WTC11 (cell line): ENCODE measurements at regions of chr11 and their contacts with region 1.

Region 1: DNA sequence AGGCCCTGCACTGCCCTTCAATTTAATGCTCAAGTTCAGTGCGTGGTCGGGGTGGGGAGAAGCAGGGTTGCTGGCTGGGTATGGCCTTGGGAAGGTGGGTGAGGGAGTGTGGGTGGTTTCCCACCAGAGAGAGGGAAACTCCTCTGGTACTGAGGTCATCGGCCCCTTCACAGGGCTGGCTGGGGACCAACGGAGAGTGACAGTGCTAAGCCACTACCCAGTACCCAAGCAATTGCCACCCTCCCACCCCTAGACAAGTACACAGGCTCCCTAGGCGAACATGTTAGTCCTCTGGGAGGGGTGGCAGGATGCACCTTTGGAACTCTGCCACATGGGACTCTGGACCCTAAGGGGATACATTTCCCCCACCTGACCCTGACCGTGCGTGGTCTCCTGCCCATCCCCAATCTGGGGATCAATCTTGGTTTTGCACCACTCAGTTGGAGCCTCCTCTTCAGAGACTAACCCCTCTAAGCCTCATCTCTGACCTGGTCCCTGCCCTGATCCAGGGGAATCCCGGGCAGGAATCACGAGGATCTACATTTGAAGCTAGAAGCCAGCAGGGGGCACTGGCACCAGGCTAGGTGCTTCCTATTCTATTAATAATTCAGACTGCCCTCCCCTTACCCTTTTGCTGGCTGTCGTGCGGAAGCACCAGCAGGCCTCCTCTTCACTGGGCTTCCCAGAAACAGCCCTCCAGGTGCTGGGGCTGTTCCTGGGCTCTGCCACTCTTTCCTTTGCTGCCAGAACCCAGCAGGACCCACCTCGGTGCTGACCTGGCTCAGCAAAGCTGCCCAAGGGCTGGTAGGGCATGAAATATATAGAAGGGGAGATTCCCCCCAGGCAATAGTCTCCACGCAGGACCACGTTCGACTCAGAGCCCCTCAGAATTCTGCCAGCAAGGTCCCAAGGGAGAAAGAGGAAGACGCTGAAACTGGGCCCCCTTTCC is 377.7 kb downstream of the TENM4 start:
- DNase-seq: peak; percentile 62
- ATAC-seq: peak; percentile 76
- H3K4me3 Mint-ChIP-seq: no peak overlapping the region
- H3K27ac Mint-ChIP-seq: no peak overlapping the region
- H3K4me1 Mint-ChIP-seq: peaks cover 40% of the 10 kb centered on the region
- H3K27me3 Mint-ChIP-seq: no peaks in the 10 kb centered on the region; the same call in 1 of the 2 replicates
- CTCF ChIP-seq: no peak

Region 2: GRCh38 chr11:79052544-79052943 is 10.5 kb before region 1 on chr11:
- CTCF ChIA-PET with region 1: interaction called, 23 read pairs
- POLR2A ChIA-PET with region 1: no interaction called
- DNase-seq: peak; percentile 55
- ATAC-seq: peak; percentile 94
- H3K4me3 Mint-ChIP-seq: no peak overlapping the region
- H3K27ac Mint-ChIP-seq: no peak overlapping the region
- H3K4me1 Mint-ChIP-seq: peaks cover 9% of the 10 kb centered on the region
- H3K27me3 Mint-ChIP-seq: no peaks in the 10 kb centered on the region
- CTCF ChIP-seq: peak; percentile 30; the same call in 1 of the 2 replicates

Region 3: DNA sequence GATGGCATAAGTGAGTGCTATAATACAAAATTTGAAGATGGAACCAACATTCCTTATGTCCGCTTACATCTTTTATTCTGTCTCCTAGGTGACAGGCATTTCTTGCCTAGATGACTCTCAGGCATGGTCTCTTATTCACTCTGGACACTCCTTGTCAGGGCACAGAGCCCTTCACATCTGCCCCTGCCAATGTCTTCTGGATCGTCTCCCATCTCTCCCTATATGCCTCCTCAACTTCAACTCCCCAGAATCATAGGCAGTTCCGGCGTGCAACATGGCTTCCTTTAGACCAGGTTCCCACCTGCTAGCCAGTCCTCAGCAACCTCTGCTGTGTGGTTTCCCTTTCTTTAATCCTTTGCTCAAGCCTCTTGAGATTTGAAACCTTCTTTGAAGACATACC is 76.8 kb after region 1 on chr11:
- CTCF ChIA-PET with region 1: no interaction called
- POLR2A ChIA-PET with region 1: no interaction called
- DNase-seq: no peak
- ATAC-seq: peak; percentile 62
- H3K4me3 Mint-ChIP-seq: no peak overlapping the region
- H3K27ac Mint-ChIP-seq: peak overlapping the region; percentile 0; the same call in 1 of the 2 replicates
- H3K4me1 Mint-ChIP-seq: no peaks in the 10 kb centered on the region
- H3K27me3 Mint-ChIP-seq: no peaks in the 10 kb centered on the region; the same call in 1 of the 2 replicates
- CTCF ChIP-seq: no peak